WTC11 (cell line): ENCODE measurements at regions of chr7 and their contacts with region 1.

Region 1: DNA sequence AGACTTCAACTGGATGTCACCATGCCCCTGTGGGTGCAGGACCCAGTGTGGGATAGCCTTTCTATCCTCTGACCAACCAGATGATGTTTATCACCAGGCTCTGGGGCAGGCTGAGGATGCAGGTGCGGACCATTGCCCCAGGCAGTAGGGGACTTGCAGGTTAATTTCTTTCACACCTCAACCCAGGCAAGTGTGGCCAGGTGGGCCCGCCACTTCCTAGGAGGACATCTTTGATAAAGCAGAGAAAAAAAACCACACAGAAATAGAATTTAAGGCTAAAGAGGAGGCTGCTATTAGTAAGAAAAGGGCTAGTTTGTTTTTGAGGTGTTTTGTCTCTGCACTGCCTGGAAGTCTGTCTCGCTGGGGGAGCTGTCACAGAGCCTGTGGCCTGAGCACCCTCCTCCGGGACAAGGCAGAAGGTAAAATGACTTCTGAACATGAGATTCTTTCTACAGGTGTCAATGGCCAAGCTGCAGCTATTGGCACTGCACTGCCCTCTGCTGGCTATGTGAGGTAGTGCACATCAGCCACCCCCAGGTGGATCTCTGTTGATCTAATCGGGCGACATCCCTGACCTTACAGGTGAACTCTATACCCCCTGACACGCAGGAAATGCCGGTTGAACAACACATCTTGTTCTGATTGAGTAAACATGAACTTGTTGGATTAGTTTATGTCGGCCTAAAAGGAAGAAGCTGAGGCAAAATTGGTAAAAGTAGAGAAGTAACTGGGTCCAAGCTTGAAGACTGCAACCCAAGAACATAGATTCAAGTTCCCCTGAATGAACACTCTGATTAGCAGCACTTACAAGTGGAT is 21.0 kb downstream of the UPP1 start:
- DNase-seq: peak; percentile 93
- ATAC-seq: peak; percentile 82
- H3K4me3 Mint-ChIP-seq: peak overlapping the region; percentile 2; the same call in 1 of the 2 replicates
- H3K27ac Mint-ChIP-seq: no peak overlapping the region
- H3K4me1 Mint-ChIP-seq: peaks cover 19% of the 10 kb centered on the region
- H3K27me3 Mint-ChIP-seq: no peaks in the 10 kb centered on the region
- CTCF ChIP-seq: peak; percentile 99

Region 2: GRCh38 chr7:47945261-47946001 is 164.6 kb before region 1 on chr7:
- CTCF ChIA-PET with region 1: interaction called, 21 read pairs
- POLR2A ChIA-PET with region 1: no interaction called
- DNase-seq: peak; percentile 77
- ATAC-seq: peak; percentile 53
- H3K4me3 Mint-ChIP-seq: no peak overlapping the region
- H3K27ac Mint-ChIP-seq: no peak overlapping the region
- H3K4me1 Mint-ChIP-seq: peaks cover 25% of the 10 kb centered on the region
- H3K27me3 Mint-ChIP-seq: no peaks in the 10 kb centered on the region
- CTCF ChIP-seq: no peak; the same call in none of the 2 replicates

Region 3: DNA sequence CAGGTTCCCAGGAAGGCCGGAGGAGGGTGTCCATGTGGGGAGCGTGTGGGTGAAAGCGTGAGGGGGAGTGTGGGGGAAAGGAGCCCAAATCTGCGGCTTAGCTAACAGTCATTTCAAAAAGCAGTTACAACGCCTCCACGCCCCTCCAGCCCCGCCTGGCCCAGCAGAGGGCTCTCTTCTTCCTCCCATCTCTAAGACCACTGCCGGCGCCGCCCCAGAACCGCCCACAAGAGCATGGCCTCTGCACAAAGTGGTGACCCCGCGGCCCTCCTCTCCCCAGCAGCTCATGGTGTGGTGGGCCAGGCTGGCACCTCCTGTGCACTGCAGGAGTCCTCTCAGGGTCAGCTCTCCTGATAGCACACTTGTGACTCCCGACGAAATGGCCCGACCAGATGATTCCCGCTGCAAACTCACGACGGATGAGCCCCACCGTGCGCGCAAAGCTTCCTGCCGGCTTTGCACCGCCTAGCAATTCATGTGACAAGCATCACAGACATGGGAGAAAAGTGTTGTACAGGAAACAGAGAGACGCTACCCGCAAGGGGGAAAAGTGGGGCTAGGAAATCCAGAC is 118.2 kb before region 1 on chr7:
- CTCF ChIA-PET with region 1: interaction called, 22 read pairs
- POLR2A ChIA-PET with region 1: interaction called, 4 read pairs
- DNase-seq: peak; percentile 87
- ATAC-seq: peak; percentile 98
- H3K4me3 Mint-ChIP-seq: peak overlapping the region; percentile 75
- H3K27ac Mint-ChIP-seq: peak overlapping the region; percentile 89
- H3K4me1 Mint-ChIP-seq: peaks cover 39% of the 10 kb centered on the region
- H3K27me3 Mint-ChIP-seq: no peaks in the 10 kb centered on the region; the same call in 1 of the 2 replicates
- CTCF ChIP-seq: no peak

Region 4: GRCh38 chr7:48015308-48015707 is 94.7 kb before region 1 on chr7:
- CTCF ChIA-PET with region 1: no interaction called
- POLR2A ChIA-PET with region 1: no interaction called
- DNase-seq: no peak
- ATAC-seq: no peak
- H3K4me3 Mint-ChIP-seq: no peak overlapping the region
- H3K27ac Mint-ChIP-seq: no peak overlapping the region
- H3K4me1 Mint-ChIP-seq: peaks cover 6% of the 10 kb centered on the region
- H3K27me3 Mint-ChIP-seq: peaks cover 4% of the 10 kb centered on the region; the same call in 1 of the 2 replicates
- CTCF ChIP-seq: no peak

Region 5: GRCh38 chr7:48088559-48089045 is 21.5 kb before region 1 on chr7:
- CTCF ChIA-PET with region 1: interaction called, 10 read pairs
- POLR2A ChIA-PET with region 1: interaction called, 5 read pairs
- DNase-seq: peak; percentile 77
- ATAC-seq: peak; percentile 18
- H3K4me3 Mint-ChIP-seq: peak overlapping the region; percentile 81
- H3K27ac Mint-ChIP-seq: peak overlapping the region; percentile 98
- H3K4me1 Mint-ChIP-seq: peaks cover 47% of the 10 kb centered on the region
- H3K27me3 Mint-ChIP-seq: no peaks in the 10 kb centered on the region
- CTCF ChIP-seq: no peak

Region 6: DNA sequence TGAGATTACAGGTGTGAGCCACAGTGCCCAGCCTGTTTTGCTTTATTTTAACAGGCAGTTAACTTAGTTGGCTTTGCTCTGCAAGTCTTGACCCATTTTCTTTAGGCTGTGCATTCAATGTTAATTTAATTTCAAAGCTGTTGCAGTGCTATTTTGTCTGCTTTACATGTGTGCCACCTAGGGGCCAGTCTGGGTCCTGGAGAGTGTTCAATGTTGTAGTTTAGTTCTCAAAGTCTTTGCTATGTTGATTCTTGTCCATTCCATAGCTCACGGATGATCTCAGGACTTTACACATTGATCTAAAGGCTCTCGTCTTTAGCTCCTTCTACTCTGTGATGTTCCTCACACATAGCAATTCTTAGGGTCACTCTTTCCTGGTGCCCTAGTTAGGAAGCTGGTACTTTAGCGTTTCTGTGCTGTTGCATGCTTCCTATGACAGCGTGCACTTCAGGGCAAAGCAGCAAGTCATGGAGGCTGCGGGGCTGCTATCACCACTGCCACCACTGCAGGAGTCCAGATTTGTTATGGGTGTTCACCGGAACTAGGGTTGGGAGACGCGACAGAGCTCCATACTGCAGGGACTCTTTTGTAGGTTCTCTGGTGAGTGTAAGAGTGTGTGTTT is 44.8 kb after region 1 on chr7:
- CTCF ChIA-PET with region 1: interaction called, 12 read pairs
- POLR2A ChIA-PET with region 1: no interaction called
- DNase-seq: peak; percentile 40
- ATAC-seq: peak; percentile 85
- H3K4me3 Mint-ChIP-seq: no peak overlapping the region
- H3K27ac Mint-ChIP-seq: no peak overlapping the region
- H3K4me1 Mint-ChIP-seq: peaks cover 10% of the 10 kb centered on the region
- H3K27me3 Mint-ChIP-seq: no peaks in the 10 kb centered on the region
- CTCF ChIP-seq: peak; percentile 40; the same call in 1 of the 2 replicates